Activated B cell treated with CpG ODN at 0.5 μM for 24 hours (primary cell): ENCODE measurements at regions of chr15 and their contacts with region 1.

Region 1: DNA sequence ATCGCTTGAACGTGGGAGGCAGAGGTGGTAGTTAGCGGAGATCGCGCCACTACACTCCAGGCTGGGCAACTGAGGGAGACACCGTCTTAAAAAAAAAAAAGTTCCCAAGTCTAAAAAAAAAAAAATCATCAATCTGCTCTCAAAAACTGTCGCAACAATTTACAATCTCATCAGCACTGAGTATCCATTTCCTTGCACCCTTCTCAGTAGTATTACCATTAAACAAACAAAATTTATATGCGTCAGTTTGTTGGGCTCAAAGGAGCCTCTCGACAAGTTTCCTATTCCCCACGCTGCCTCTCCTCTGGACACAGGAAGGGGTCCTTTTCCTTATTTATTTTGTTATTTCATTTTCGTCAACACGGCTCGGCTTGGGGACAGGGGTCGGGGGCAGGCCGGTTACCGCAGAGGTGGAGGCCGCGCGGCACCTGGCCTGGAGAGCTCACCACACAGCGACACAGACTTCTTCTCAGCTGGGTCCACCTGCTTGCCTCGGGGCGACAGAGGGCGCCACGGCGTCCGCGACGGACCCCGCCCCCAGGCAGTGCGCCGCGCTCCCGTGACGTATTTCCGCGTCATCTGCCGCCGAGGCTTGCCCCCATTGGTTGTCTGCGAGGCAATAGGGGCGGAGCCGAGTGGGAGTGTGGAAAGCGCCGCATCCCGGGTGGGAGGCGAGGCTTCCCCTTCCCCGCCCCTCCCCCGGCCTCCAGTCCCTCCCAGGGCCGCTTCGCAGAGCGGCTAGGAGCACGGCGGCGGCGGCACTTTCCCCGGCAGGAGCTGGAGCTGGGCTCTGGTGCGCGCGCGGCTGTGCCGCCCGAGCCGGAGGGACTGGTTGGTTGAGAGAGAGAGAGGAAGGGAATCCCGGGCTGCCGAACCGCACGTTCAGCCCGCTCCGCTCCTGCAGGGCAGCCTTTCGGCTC is at the start of gene MAP2K1:
- DNase-seq: peak; percentile 97
- ATAC-seq: peak; percentile 86
- H3K4me3 Mint-ChIP-seq: peak within 1 kb of the TSS; percentile 95
- H3K27ac Mint-ChIP-seq: peak within 1 kb of the TSS; percentile 97
- H3K4me1 Mint-ChIP-seq: peaks cover 46% of the 10 kb centered on the region
- H3K27me3 Mint-ChIP-seq: no peaks in the 10 kb centered on the region
- CTCF ChIP-seq: peak; percentile 23
- total RNA-seq, gene MAP2K1: 37.9 and 42.0 TPM in 2 replicates

Region 2: GRCh38 chr15:66053991-66054390 is 332.5 kb before region 1 on chr15:
- CTCF ChIA-PET with region 1: no interaction called
- POLR2A ChIA-PET with region 1: no interaction called
- intact Hi-C with region 1: no loop called
- DNase-seq: no peak
- ATAC-seq: no peak
- H3K4me3 Mint-ChIP-seq: no peak overlapping the region
- H3K27ac Mint-ChIP-seq: no peak overlapping the region
- H3K4me1 Mint-ChIP-seq: no peaks in the 10 kb centered on the region
- H3K27me3 Mint-ChIP-seq: peaks cover 5% of the 10 kb centered on the region
- CTCF ChIP-seq: no peak

Region 3: GRCh38 chr15:66356345-66357236 is 29.9 kb before region 1 on chr15 and contains the start of gene TIPIN:
- CTCF ChIA-PET with region 1: interaction called, 4 read pairs
- POLR2A ChIA-PET with region 1: interaction called, 24 read pairs
- intact Hi-C with region 1: loop called (anchors 1 kb)
- DNase-seq: peak; percentile 92
- ATAC-seq: peak; percentile 94
- H3K4me3 Mint-ChIP-seq: peak within 1 kb of the TSS; percentile 98
- H3K27ac Mint-ChIP-seq: peak within 1 kb of the TSS; percentile 95
- H3K4me1 Mint-ChIP-seq: peaks cover 24% of the 10 kb centered on the region
- H3K27me3 Mint-ChIP-seq: no peaks in the 10 kb centered on the region
- CTCF ChIP-seq: no peak
- total RNA-seq, gene TIPIN: 10.8 and 11.5 TPM in 2 replicates

Region 4: DNA sequence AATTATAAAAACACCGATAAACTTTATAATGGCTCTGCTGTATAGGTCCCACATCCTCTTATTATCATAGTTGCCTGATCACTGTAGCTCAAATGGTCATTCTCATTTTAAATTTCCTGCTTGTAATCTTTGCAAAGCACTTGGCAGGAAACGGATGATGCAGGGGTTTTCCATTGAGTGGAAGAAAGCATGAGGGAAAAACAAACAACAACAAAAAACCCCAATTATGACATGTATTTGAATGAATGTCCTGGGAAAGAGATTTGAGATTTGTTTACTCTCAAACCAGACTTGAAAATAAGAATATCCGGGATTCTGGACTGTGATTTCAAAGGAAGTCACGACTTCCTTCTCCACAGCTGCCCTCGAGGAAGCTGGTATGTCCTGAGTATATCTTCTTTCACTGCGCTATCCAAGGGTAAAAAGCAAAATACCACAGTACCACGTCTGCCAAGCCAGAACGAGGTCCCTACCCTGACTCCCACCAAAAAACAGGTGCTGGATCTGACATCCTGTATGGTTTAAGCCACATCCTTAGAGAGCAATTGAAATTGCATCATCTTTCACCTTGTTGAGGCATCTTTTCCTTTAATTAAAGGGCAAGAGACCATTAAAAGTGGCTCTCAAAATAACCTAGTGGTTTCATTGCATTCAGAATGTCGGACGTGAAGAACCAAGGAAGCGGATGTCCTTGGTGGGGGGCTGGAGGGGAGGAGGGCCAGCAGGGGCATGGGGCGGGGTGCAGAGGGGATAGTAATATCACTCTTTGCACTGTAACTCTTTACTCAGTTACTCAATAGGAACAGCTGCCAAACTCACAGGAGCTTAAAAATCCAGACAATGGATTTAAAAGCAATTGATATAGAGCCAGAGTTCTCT is 16.5 kb before region 1 on chr15:
- CTCF ChIA-PET with region 1: no interaction called
- POLR2A ChIA-PET with region 1: interaction called, 21 read pairs
- intact Hi-C with region 1: loop called (anchors 1 kb)
- DNase-seq: no peak
- ATAC-seq: peak; percentile 78
- H3K4me3 Mint-ChIP-seq: peak overlapping the region; percentile 80
- H3K27ac Mint-ChIP-seq: peak overlapping the region; percentile 89
- H3K4me1 Mint-ChIP-seq: peaks cover 13% of the 10 kb centered on the region
- H3K27me3 Mint-ChIP-seq: no peaks in the 10 kb centered on the region
- CTCF ChIP-seq: no peak

Region 5: DNA sequence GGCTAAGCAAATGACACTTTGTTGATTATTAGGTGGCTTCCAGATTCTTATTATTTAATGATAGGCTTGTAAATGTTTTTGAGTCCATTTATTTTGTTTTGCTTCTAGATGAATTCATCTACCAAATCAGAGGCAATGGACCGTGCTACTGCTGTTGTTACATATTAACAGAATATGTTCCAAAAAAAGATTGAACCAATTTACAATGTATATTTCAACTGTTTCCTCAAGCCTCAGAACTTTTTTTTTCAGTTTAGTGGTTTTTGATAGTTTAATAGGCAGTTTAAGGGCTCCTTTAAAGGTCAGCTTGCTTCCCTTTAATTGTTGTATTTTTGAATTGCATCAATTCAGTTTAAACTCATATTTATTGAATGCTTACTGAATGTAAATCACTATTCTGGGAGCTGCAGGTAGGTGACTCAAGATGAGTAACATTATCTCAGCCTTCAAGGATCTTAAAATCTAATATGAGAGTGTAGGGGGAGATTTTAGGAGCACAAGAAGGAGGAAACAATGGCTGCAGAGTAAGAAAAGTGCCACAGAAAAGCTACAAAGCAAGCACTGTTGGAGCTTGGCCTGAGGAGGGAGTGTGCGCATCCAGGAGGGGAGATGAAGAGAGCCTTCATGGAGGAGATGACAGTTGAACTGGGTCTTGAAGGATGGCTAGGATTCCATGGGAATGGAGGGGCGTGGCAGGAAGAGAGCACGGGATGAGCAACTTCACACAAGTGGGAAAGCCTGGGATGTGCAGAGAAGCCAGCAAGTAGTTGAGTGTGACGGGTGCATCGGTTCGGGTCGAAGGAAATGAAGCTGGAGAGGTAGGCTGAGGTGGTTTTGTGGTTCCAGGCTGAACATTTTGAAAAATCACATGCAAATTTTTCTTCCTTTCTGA is 14.9 kb after region 1 on chr15:
- CTCF ChIA-PET with region 1: interaction called, 4 read pairs
- POLR2A ChIA-PET with region 1: interaction called, 4 read pairs
- intact Hi-C with region 1: loop called (anchors 1 kb)
- DNase-seq: no peak
- ATAC-seq: peak; percentile 31
- H3K4me3 Mint-ChIP-seq: peak overlapping the region; percentile 72
- H3K27ac Mint-ChIP-seq: no peak overlapping the region
- H3K4me1 Mint-ChIP-seq: peaks cover 61% of the 10 kb centered on the region
- H3K27me3 Mint-ChIP-seq: no peaks in the 10 kb centered on the region
- CTCF ChIP-seq: no peak

Region 6: DNA sequence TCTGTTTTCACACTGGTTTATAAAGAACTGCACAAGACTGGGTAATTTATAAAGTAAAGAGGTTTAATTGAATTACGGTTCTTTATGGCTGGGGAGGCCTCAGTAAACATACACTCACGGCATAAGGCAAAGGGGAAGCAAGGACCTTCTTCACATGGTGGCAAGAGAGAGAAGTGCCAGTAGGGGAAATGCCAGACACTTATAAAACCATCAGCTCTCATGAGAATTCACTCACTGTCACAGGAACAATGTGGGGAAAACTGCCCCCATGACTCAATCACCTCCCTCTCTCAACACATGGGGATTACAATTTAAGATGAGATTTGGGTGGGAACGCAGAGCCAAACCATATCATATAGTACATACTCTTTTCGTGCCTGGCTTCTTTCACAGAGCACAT is 42.7 kb after region 1 on chr15:
- CTCF ChIA-PET with region 1: no interaction called
- POLR2A ChIA-PET with region 1: no interaction called
- intact Hi-C with region 1: loop called (anchors 2 kb)
- DNase-seq: no peak
- ATAC-seq: peak; percentile 73
- H3K4me3 Mint-ChIP-seq: peak overlapping the region; percentile 35
- H3K27ac Mint-ChIP-seq: peak overlapping the region; percentile 31
- H3K4me1 Mint-ChIP-seq: peaks cover 47% of the 10 kb centered on the region
- H3K27me3 Mint-ChIP-seq: no peaks in the 10 kb centered on the region
- CTCF ChIP-seq: no peak

Region 7: DNA sequence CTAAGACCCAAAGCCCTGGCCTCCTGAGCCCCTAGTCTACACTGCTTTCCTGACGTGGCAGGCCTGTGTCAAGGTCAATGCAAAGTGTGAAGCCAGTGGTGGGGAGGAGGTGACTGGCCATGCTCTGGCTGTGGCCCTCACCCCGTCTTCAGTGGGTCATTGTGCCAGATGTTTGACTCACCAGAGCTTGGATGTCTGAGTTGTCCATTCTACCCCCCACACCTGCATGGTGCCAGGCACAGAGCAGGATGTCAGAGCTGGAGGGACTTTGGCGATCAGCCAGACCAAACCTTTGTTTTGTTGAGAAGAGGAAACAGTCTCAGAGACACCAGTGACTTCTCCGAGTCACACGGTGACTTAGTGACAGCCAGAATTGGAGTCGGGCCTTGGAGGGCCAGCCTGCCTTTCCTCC is 365.1 kb after region 1 on chr15:
- CTCF ChIA-PET with region 1: no interaction called
- POLR2A ChIA-PET with region 1: no interaction called
- intact Hi-C with region 1: no loop called
- DNase-seq: no peak
- ATAC-seq: no peak
- H3K4me3 Mint-ChIP-seq: no peak overlapping the region
- H3K27ac Mint-ChIP-seq: no peak overlapping the region
- H3K4me1 Mint-ChIP-seq: peaks cover 5% of the 10 kb centered on the region
- H3K27me3 Mint-ChIP-seq: peaks cover 10% of the 10 kb centered on the region
- CTCF ChIP-seq: no peak